ENCODE measurements at regions of chr5 and their contacts with region 1.

Region 1: DNA sequence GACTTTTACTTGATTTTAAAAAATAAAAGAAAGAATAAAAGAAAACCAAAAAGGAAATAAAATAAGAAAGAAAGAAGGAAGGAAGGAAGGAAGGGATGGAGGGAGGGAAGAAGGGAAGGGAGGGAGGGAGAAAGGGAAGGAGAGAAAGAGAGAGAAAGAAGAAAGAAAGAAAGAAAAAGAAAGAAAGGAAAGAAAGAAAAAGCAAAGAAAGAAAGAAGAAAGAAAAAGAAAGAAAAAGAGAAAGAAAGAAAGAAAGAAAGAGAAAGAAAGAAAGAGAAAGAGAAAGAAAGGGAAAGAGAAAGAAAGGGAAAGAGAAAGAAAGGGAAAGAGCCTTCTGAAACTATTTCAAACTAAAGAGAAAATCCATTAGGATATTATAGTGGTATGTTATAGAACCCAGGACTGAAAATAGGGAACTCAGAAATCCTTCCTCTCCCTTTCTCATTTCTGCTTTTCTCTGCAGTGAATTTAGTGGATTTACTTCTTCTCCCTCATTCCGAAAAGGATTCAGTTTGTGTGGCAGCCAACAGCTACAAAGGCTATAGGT is 414.7 kb upstream of the CCNG1 start:
- DNase-seq: no peak

Region 2: GRCh38 chr5:161614342-161614741 is 1408.3 kb before region 1 on chr5:
- intact Hi-C with region 1: loop called in 1 of 2 experiments (anchors 5 kb)
- DNase-seq: no peak

Region 3: DNA sequence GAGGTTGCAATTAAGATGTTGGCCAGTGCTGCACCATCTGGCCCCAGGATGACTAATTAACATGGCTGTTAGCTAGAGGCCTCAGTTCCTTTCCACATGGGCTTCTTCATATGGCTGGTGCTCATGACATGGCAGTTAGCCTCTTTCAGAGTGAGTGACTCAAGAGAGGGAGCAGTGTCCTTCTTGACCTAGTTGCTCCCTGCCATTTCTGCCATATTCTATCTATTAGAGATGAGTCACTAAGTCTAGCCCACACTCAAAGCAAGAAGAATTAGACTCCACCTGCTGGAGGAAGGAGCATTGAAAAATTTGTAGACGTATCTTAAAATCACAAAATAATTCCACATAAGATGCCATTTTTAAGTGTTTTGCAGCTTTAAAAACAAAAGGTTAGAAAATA is 236.4 kb before region 1 on chr5:
- intact Hi-C with region 1: no loop called
- DNase-seq: no peak

Measured in posterior vena cava (tissue), 2 donors.